ENCODE measurements at regions of chr9 and their contacts with region 1.

Region 1: GRCh38 chr9:120842690-120843499 is at the start of gene PSMD5:
- DNase-seq: peak; percentile 89 to 99 (median 92)
- ATAC-seq: peak; percentile 86
- H3K4me3 ChIP-seq: peak within 1 kb of the TSS; percentile 93
- H3K4me3 Mint-ChIP-seq: peak within 1 kb of the TSS; percentile 96
- H3K27ac ChIP-seq: peak within 1 kb of the TSS; percentile 93 to 98
- H3K27ac Mint-ChIP-seq: peak within 1 kb of the TSS; percentile 99
- H3K4me1 ChIP-seq: peaks cover 63% of the 10 kb centered on the region
- H3K4me1 Mint-ChIP-seq: peaks cover 79% of the 10 kb centered on the region
- H3K27me3 ChIP-seq: no peaks in the 10 kb centered on the region
- H3K27me3 Mint-ChIP-seq: no peaks in the 10 kb centered on the region
- CTCF ChIP-seq: no peak
- total RNA-seq, gene PSMD5: 35.4 to 44.3 TPM

Region 2: GRCh38 chr9:119487118-119487827 is 1355.6 kb before region 1 on chr9:
- CTCF ChIA-PET with region 1: no interaction called
- POLR2A ChIA-PET with region 1: no interaction called
- intact Hi-C with region 1: no loop called
- DNase-seq: no peak
- ATAC-seq: no peak
- H3K4me3 ChIP-seq: no peak overlapping the region
- H3K4me3 Mint-ChIP-seq: no peak overlapping the region
- H3K27ac ChIP-seq: no peak overlapping the region
- H3K27ac Mint-ChIP-seq: no peak overlapping the region
- H3K4me1 ChIP-seq: no peaks in the 10 kb centered on the region
- H3K4me1 Mint-ChIP-seq: no peaks in the 10 kb centered on the region
- H3K27me3 ChIP-seq: no peaks in the 10 kb centered on the region
- H3K27me3 Mint-ChIP-seq: no peaks in the 10 kb centered on the region
- CTCF ChIP-seq: no peak

Region 3: GRCh38 chr9:120366646-120367019 is 476.3 kb before region 1 on chr9:
- CTCF ChIA-PET with region 1: no interaction called
- POLR2A ChIA-PET with region 1: no interaction called
- intact Hi-C with region 1: no loop called
- DNase-seq: no peak
- ATAC-seq: no peak
- H3K4me3 ChIP-seq: no peak overlapping the region
- H3K4me3 Mint-ChIP-seq: no peak overlapping the region
- H3K27ac ChIP-seq: no peak overlapping the region
- H3K27ac Mint-ChIP-seq: no peak overlapping the region
- H3K4me1 ChIP-seq: no peaks in the 10 kb centered on the region
- H3K4me1 Mint-ChIP-seq: no peaks in the 10 kb centered on the region
- H3K27me3 ChIP-seq: no peaks in the 10 kb centered on the region
- H3K27me3 Mint-ChIP-seq: no peaks in the 10 kb centered on the region
- CTCF ChIP-seq: no peak

Region 4: DNA sequence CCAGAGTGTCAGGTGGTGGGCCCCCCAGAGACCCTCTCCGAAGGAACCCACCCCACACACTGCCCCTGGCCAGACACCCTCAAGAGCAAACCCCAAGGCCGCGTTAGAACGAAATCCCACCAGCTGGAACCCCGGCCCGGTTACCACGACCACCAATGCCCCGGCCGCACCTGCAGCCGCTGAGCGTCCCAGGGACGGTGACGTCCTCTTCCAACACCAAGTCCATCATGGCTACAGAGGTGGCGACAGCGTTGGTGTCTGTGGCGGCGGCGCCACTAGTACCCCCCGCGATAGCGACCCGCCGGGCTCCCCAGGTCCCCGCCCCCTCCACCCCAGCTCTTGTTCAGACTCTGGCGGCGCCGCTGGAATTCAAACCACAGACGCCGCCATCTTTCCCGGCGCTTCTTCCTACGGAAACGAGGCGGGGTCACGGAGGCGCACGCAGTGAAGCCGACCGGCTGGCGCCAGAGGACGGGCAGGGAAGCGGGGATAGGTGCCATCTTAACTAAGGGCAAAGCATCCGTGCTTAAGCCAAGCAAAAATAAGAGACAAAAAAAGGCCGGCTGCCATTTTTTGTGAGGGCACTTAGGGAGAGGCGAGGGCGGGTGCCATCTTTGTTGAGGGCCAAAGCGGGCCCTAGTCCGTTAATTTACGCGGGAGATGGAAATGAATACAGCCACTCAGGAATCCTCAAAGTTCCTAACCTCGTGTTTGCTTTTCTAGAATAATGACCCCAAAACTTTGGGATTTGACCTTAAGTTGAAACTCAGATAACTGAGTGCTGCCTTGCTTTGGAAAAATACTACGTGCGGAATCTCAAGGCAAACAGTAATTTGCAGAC is 262.9 kb before region 1 on chr9 and contains the start of gene CDK5RAP2:
- CTCF ChIA-PET with region 1: no interaction called
- POLR2A ChIA-PET with region 1: no interaction called
- intact Hi-C with region 1: loop called in 1 of 2 experiments (anchors 5 kb)
- DNase-seq: peak; percentile 84 to 98 (median 90)
- ATAC-seq: peak; percentile 98
- H3K4me3 ChIP-seq: peak within 1 kb of the TSS; percentile 84
- H3K4me3 Mint-ChIP-seq: peak within 1 kb of the TSS; percentile 99
- H3K27ac ChIP-seq: peak within 1 kb of the TSS; percentile 26 to 55
- H3K27ac Mint-ChIP-seq: peak within 1 kb of the TSS; percentile 92
- H3K4me1 ChIP-seq: peaks cover 29% of the 10 kb centered on the region
- H3K4me1 Mint-ChIP-seq: peaks cover 48% of the 10 kb centered on the region
- H3K27me3 ChIP-seq: no peaks in the 10 kb centered on the region
- H3K27me3 Mint-ChIP-seq: no peaks in the 10 kb centered on the region
- CTCF ChIP-seq: no peak
- total RNA-seq, gene CDK5RAP2: 55.0 to 56.0 TPM

Region 5: GRCh38 chr9:120856700-120857099 is 13.8 kb after region 1 on chr9:
- CTCF ChIA-PET with region 1: no interaction called
- POLR2A ChIA-PET with region 1: interaction called, 11 read pairs
- intact Hi-C with region 1: no loop called
- DNase-seq: no peak
- ATAC-seq: no peak
- H3K4me3 ChIP-seq: no peak overlapping the region
- H3K4me3 Mint-ChIP-seq: no peak overlapping the region
- H3K27ac ChIP-seq: no peak overlapping the region
- H3K27ac Mint-ChIP-seq: no peak overlapping the region
- H3K4me1 ChIP-seq: no peaks in the 10 kb centered on the region
- H3K4me1 Mint-ChIP-seq: peaks cover 29% of the 10 kb centered on the region
- H3K27me3 ChIP-seq: no peaks in the 10 kb centered on the region
- H3K27me3 Mint-ChIP-seq: no peaks in the 10 kb centered on the region
- CTCF ChIP-seq: no peak

Region 6: DNA sequence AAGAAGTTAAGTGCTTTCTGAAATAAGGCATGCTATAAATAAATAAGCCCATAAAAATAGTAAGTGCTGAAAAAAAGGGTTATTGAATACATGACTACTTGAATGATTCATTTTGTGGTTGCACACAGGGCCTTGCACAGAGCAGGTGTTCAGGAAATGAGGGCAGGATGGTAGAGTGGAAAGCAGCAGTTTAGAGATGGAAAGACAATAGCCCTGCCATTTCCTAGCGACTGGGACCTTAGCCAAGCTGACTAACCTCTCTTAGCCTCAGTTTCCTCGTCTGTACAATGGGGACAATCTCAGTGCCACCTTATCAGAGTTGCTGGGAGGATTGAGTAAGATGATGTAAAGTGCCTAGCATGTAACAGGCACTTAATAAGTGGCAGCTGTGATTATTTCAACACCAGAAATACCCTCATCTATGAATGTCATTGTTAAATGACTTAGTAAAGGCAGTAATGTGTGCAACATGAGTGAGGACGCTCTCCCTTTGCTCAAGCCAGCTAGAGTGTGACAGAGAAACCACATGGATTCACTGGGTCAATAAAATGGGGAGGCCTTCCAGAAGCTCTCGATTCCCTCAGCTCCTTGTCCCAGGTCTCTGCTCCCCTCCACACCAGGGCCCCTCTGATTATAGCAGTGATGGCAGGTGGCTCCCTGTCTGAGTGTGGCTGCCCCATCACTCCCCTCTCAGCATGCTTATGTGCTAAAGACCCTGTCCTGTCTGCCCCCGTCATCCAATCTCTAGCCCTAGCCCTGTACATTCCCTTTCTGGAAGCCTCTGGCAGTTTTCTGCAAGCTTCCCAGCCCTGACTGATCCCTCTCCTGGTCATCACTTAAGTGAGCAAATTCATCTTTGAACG is 50.1 kb after region 1 on chr9:
- CTCF ChIA-PET with region 1: no interaction called
- POLR2A ChIA-PET with region 1: interaction called, 22 read pairs
- intact Hi-C with region 1: loop called in 1 of 2 experiments (anchors 2 kb)
- DNase-seq: peak in 13 of 14 experiments; percentile 50 to 89 (median 59)
- ATAC-seq: peak; percentile 55
- H3K4me3 ChIP-seq: no peak overlapping the region
- H3K4me3 Mint-ChIP-seq: peak overlapping the region; percentile 28
- H3K27ac ChIP-seq: peak overlapping the region; percentile 86 to 88
- H3K27ac Mint-ChIP-seq: peak overlapping the region; percentile 98
- H3K4me1 ChIP-seq: peaks cover 96% of the 10 kb centered on the region
- H3K4me1 Mint-ChIP-seq: peaks cover 77% of the 10 kb centered on the region
- H3K27me3 ChIP-seq: no peaks in the 10 kb centered on the region
- H3K27me3 Mint-ChIP-seq: no peaks in the 10 kb centered on the region
- CTCF ChIP-seq: no peak

Region 7: GRCh38 chr9:120928483-120929228 is 85.8 kb after region 1 on chr9:
- CTCF ChIA-PET with region 1: interaction called, 3 read pairs
- POLR2A ChIA-PET with region 1: interaction called, 37 read pairs
- intact Hi-C with region 1: no loop called
- DNase-seq: peak; percentile 58 to 90 (median 78)
- ATAC-seq: peak; percentile 39
- H3K4me3 ChIP-seq: peak overlapping the region; percentile 90
- H3K4me3 Mint-ChIP-seq: peak overlapping the region; percentile 88
- H3K27ac ChIP-seq: peak overlapping the region; percentile 98 to 100
- H3K27ac Mint-ChIP-seq: peak overlapping the region; percentile 100
- H3K4me1 ChIP-seq: peaks cover 90% of the 10 kb centered on the region
- H3K4me1 Mint-ChIP-seq: peaks cover 91% of the 10 kb centered on the region
- H3K27me3 ChIP-seq: no peaks in the 10 kb centered on the region
- H3K27me3 Mint-ChIP-seq: no peaks in the 10 kb centered on the region
- CTCF ChIP-seq: no peak

Region 8: DNA sequence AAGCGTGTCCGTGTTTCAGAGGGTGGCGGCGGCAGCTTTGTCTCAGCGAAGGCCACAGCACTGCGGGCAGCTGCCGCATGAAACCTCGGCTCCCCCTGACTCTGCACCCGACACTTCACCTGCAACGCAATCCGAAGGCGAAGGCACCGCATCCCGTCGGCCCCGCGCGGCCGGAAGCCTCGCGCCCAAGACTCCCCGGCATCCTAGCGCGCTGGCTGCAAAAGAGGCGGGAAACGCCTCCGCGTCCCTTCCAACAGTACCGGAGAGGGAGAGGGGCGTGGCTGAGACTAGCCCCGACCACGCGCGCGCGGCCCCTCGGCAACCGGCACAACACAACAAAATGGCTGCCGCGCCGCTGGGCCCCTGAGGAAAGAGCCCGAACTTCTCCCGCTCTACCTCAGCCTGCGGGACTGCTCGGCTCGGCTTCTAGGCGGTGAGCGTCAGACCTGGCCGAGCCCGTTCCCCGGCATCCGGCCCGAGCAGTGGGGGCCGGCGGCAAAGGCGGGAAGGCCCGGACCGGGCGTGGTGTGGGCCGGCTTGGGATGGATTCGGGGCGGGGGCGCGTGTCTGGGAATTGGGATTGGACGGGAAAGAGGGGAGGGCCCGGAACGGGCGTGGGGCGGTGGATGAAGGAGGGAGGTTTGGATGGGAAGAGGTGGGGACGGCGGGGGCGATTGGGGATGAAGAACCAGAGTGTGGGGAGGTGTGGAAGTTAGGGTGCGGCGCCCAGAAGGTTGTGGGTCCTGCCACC is 231.9 kb after region 1 on chr9 and contains the start of gene CNTRL:
- CTCF ChIA-PET with region 1: no interaction called
- POLR2A ChIA-PET with region 1: interaction called, 4 read pairs
- intact Hi-C with region 1: loop called in 1 of 2 experiments (anchors 2 kb)
- DNase-seq: peak; percentile 54 to 93 (median 78)
- ATAC-seq: peak; percentile 81
- H3K4me3 ChIP-seq: peak within 1 kb of the TSS; percentile 92
- H3K4me3 Mint-ChIP-seq: peak within 1 kb of the TSS; percentile 89
- H3K27ac ChIP-seq: peak within 1 kb of the TSS; percentile 75 to 81
- H3K27ac Mint-ChIP-seq: peak within 1 kb of the TSS; percentile 98
- H3K4me1 ChIP-seq: peaks cover 30% of the 10 kb centered on the region
- H3K4me1 Mint-ChIP-seq: peaks cover 54% of the 10 kb centered on the region
- H3K27me3 ChIP-seq: no peaks in the 10 kb centered on the region
- H3K27me3 Mint-ChIP-seq: no peaks in the 10 kb centered on the region
- CTCF ChIP-seq: no peak
- total RNA-seq, gene CNTRL: 35.1 to 38.1 TPM